ENCODE measurements at regions of chr3 and their contacts with region 1.

Region 1: DNA sequence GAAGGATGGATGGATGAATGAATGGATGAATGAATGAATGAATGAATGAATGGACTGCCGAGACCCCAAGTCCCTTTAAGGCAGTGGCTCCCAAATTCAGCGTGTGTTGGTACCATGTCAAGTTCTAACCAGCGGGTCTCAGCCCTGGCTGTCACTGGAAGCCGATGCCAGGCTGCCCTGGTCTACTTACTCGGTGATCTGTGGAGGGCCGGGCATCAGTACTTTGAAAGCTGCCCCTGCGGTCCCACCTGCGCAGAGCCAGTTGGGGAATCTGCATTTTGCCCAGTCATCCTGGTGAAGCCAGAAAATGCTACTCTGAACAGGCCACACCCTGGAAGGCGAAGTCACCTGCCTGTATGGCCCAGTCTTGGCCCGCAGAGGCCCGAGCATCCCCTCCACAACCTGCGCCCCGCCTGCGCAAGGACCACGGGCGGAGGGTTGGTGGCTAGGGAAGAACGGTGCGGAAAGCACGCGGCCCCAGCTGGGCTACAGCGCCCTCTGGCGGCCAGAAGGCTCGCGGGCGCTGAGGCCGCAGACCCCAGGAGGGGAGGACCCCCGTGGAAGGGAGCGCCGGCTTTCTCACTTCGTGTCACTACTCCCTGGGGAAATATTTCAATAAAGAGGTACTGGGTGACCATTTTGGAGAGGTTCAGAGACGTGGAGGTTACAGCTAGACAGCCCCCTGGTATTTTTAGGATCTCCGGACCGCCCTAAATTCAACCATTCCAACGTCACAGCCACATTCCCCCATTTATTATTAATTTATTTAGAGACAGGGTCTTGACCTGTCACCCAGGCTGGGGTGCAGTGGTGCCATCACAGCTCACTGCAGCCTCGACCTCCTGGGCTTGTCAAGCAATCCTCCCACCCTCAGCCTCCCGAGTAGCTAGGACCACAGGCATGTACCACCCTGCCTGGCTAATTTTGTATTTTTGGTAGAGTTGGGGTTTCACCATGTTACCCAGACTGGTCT is 34.9 kb downstream of the PRKCD start:
- DNase-seq: peak; percentile 21 to 75 (median 55)
- ATAC-seq: peak; percentile 79
- H3K4me3 ChIP-seq: no peak overlapping the region
- H3K4me3 Mint-ChIP-seq: peak overlapping the region in 4 of 10 donors; percentile 6 to 62 (median 38)
- H3K27ac ChIP-seq: no peak overlapping the region
- H3K27ac Mint-ChIP-seq: peak overlapping the region in 1 of 9 donors; percentile 27
- H3K4me1 ChIP-seq: peaks cover 0 to 4% of the 10 kb centered on the region in 2 donors
- H3K4me1 Mint-ChIP-seq: peaks cover 5 to 12% (median 7%) of the 10 kb centered on the region in 7 donors
- H3K27me3 ChIP-seq: no peaks in the 10 kb centered on the region
- H3K27me3 Mint-ChIP-seq: peaks cover 0 to 6% (median 0%) of the 10 kb centered on the region in 5 donors

Region 2: GRCh38 chr3:52742418-52743041 is 453.4 kb before region 1 on chr3:
- CTCF ChIA-PET with region 1: no interaction called
- POLR2A ChIA-PET with region 1: no interaction called
- intact Hi-C with region 1: loop called in 1 of 2 experiments (anchors 2 kb)
- DNase-seq: peak in 5 of 9 donors; percentile 18 to 35 (median 20)
- ATAC-seq: peak; percentile 50
- H3K4me3 ChIP-seq: no peak overlapping the region
- H3K4me3 Mint-ChIP-seq: no peak overlapping the region
- H3K27ac ChIP-seq: no peak overlapping the region
- H3K27ac Mint-ChIP-seq: no peak overlapping the region
- H3K4me1 ChIP-seq: no peaks in the 10 kb centered on the region
- H3K4me1 Mint-ChIP-seq: peaks cover 0 to 2% (median 0%) of the 10 kb centered on the region in 7 donors
- H3K27me3 ChIP-seq: no peaks in the 10 kb centered on the region
- H3K27me3 Mint-ChIP-seq: no peaks in the 10 kb centered on the region

Region 3: DNA sequence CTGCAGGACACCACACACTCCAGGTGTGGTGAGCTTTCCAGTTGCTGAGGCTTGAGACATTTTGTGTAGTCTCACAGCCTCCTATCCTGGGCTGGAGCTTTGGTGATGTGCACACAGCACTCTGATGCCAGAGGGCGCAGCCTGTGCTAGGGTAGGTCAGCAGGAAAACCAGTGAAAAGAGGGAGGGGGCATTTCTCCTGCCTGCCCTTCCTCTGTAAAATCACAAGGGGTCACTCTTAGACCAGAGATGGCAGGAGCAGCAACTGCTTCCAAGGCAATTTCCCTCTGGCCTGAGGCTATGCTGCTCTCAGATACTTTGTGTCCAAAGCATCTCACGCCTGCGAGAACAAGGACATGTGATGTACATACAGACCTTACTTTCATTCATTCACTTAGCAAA is 344.5 kb before region 1 on chr3:
- CTCF ChIA-PET with region 1: interaction called, 7 read pairs
- POLR2A ChIA-PET with region 1: no interaction called
- intact Hi-C with region 1: loop called in 1 of 2 experiments (anchors 5 kb)
- DNase-seq: peak in 5 of 9 donors; percentile 22 to 40 (median 35)
- ATAC-seq: peak; percentile 70
- H3K4me3 ChIP-seq: no peak overlapping the region
- H3K4me3 Mint-ChIP-seq: no peak overlapping the region
- H3K27ac ChIP-seq: no peak overlapping the region
- H3K27ac Mint-ChIP-seq: no peak overlapping the region
- H3K4me1 ChIP-seq: no peaks in the 10 kb centered on the region
- H3K4me1 Mint-ChIP-seq: no peaks in the 10 kb centered on the region
- H3K27me3 ChIP-seq: no peaks in the 10 kb centered on the region
- H3K27me3 Mint-ChIP-seq: no peaks in the 10 kb centered on the region

Region 4: DNA sequence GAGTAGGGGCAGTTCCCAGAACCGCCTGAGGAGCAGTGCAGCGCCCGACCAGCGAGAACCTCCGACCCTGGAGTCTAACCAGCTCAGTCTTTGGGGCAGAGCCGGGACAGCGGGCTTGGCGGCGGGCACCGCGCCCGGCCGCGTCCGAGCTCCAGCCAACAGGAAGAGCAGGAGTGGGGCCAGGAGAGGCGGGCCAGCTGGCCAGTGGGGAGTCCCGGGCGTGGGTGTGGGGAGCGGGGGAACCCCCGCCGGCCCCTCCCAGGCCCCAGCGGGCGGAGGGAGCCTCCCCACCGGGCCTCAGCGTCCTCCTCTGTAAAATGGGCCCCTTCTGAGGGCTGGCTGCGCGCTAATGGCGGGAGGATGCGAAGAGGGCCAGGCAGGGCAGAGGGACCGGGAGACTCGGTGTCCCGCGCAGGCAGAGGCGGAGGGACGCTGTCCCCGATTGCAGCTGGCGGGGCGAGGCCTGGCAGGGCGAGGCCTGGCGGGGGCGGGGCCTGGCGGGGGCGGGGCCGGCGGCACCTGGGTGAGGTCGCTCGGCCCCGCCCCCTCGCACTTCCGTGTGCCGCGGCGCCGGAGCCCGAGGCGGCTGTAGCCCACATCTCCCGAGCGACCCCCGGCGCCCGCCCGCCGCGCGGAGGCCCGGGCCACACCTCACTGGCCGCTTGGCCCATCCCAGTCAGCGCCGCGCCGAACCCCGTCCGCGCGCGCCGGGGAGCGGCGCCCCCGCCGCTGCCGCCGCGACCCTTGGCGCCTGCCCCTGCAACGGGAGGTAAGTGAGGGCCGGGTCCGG is 35.0 kb before region 1 on chr3 and contains the start of gene PRKCD:
- CTCF ChIA-PET with region 1: interaction called, 3 read pairs
- POLR2A ChIA-PET with region 1: no interaction called
- intact Hi-C with region 1: loop called (anchors 2 to 5 kb)
- DNase-seq: peak; percentile 55 to 81 (median 71)
- ATAC-seq: peak; percentile 82
- H3K4me3 ChIP-seq: peak within 1 kb of the TSS; percentile 68
- H3K4me3 Mint-ChIP-seq: peak within 1 kb of the TSS; percentile 80 to 95 (median 92)
- H3K27ac ChIP-seq: peak within 1 kb of the TSS; percentile 77
- H3K27ac Mint-ChIP-seq: peak within 1 kb of the TSS; percentile 75 to 94 (median 90)
- H3K4me1 ChIP-seq: peaks cover 9 to 22% of the 10 kb centered on the region in 2 donors
- H3K4me1 Mint-ChIP-seq: peaks cover 18 to 30% (median 23%) of the 10 kb centered on the region in 7 donors
- H3K27me3 ChIP-seq: no peaks in the 10 kb centered on the region
- H3K27me3 Mint-ChIP-seq: peaks cover 0 to 40% (median 12%) of the 10 kb centered on the region in 5 donors
- total RNA-seq, gene PRKCD: 10.2 to 72.8 (median 18.7) TPM

Region 5: DNA sequence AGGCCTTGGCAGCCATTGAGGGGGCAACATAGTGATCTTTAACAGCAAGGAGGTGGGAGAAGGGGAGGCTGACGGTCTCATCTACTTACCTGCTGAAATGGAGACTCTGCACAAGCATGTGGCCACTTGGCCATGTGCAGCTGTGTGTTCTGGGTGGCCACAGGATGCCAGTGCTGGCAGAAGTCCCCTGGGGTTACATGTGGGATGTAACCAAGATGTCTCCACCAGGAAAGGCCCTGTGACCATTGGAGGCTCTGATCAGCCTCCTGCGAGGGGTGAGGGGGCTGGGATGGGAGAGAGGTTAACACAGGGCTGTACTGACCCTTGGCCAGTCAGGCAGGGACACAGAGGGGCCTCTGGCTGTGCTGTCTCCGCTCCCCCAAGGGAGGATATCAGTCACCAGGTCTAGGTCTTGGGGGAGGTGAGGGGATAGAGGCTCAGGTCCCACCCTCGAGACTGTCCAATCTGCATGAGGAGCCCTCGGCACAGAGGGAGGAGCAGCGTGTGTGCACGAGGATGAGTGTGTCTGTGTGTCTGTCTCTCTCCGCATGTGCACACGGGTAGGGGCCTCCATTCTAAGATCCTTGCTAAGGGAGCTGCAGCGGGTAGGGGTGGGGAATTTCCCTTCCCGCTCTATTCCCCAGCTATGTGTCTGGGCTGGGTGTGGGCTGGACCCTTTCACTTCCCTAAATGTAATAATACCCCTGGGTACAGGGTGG is 15.4 kb before region 1 on chr3:
- CTCF ChIA-PET with region 1: no interaction called
- POLR2A ChIA-PET with region 1: no interaction called
- intact Hi-C with region 1: no loop called
- DNase-seq: no peak
- ATAC-seq: peak; percentile 78
- H3K4me3 ChIP-seq: no peak overlapping the region
- H3K4me3 Mint-ChIP-seq: no peak overlapping the region
- H3K27ac ChIP-seq: no peak overlapping the region
- H3K27ac Mint-ChIP-seq: no peak overlapping the region
- H3K4me1 ChIP-seq: no peaks in the 10 kb centered on the region
- H3K4me1 Mint-ChIP-seq: peaks cover 0 to 10% (median 0%) of the 10 kb centered on the region in 7 donors
- H3K27me3 ChIP-seq: no peaks in the 10 kb centered on the region
- H3K27me3 Mint-ChIP-seq: no peaks in the 10 kb centered on the region

Measured in naive thymus-derived CD4-positive, alpha-beta T cell (primary cell).